ENCODE measurements at regions of chr2 and their contacts with region 1.

Region 1: GRCh38 chr2:118371515-118371914 is 283.2 kb downstream of the INSIG2 start:
- DNase-seq: peak; percentile 62
- H3K4me3 Mint-ChIP-seq: no peak overlapping the region
- H3K27ac Mint-ChIP-seq: no peak overlapping the region
- H3K4me1 Mint-ChIP-seq: peaks cover 7% of the 10 kb centered on the region
- H3K27me3 Mint-ChIP-seq: no peaks in the 10 kb centered on the region
- CTCF ChIP-seq: peak; percentile 90

Region 2: DNA sequence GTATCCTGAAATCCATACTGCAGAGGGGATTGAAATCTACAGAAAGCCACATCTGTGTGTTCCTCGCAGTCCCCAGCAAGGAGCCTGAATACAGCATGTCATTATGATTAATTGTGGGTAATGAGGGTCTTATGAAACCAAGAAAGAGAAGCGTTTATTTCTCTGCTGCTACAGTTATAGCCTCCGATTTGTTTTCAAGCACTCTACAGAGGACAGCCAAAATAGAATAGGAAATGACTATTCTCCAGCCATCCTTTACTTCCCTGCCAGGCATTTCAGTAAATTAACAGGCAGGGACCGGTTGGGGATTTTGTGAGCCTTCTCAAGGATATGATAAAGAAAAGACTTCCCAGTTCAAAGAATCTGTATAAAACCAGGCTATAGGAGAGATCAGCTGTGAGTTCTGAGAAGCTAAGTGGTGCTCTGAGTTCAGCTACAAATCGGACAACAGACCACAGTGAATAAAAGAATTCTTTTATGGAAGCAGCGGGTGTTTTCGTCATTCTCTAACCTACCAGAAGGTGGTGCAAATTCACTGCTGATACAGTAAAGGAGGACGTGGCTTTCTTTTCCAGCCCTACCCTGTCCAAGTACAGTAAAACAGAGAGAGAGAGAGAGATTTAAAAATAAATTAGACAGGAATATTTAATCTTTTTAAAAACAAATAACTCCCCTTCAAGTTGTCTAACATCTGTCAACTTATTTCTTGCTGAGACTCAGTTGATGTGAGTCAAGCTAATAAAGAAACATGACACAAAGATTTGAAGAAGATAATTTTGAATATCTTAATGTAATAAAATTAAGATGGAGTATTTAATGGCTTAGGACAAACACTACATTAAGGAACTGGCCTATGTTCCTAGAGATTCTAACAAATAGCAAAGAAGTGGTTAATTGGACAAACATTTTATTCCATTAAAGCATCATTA is 149.6 kb before region 1 on chr2:
- CTCF ChIA-PET with region 1: interaction called, 16 read pairs
- POLR2A ChIA-PET with region 1: no interaction called
- intact Hi-C with region 1: loop called (anchors 1 kb)
- DNase-seq: peak; percentile 72
- H3K4me3 Mint-ChIP-seq: no peak overlapping the region
- H3K27ac Mint-ChIP-seq: no peak overlapping the region
- H3K4me1 Mint-ChIP-seq: peaks cover 12% of the 10 kb centered on the region
- H3K27me3 Mint-ChIP-seq: peaks cover 3% of the 10 kb centered on the region
- CTCF ChIP-seq: peak; percentile 73

Region 3: GRCh38 chr2:118481299-118481698 is 109.8 kb after region 1 on chr2:
- CTCF ChIA-PET with region 1: interaction called, 4 read pairs
- POLR2A ChIA-PET with region 1: no interaction called
- intact Hi-C with region 1: loop called (anchors 5 kb)
- DNase-seq: no peak
- H3K4me3 Mint-ChIP-seq: no peak overlapping the region
- H3K27ac Mint-ChIP-seq: no peak overlapping the region
- H3K4me1 Mint-ChIP-seq: no peaks in the 10 kb centered on the region
- H3K27me3 Mint-ChIP-seq: no peaks in the 10 kb centered on the region
- CTCF ChIP-seq: no peak

Region 4: DNA sequence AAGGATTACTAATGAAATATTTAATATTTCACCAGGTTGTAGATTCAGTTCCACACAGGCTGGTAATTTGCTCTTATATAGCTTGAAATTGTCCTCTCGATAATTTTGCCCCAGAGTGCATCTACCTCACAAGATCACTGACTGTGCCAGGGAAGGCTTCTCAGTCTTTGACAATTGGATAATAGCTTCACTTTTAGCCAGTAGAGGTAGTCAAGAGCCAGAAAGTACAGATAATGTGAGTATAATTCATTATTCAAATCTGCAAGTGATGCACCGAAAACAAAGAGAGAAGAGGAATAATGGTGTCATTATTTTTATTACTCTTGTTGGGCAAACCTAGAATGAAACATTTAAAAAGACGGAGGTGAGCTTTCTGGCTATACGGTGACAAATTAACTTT is 183.1 kb after region 1 on chr2:
- CTCF ChIA-PET with region 1: no interaction called
- POLR2A ChIA-PET with region 1: no interaction called
- intact Hi-C with region 1: loop called (anchors 5 kb)
- DNase-seq: peak; percentile 3
- H3K4me3 Mint-ChIP-seq: no peak overlapping the region
- H3K27ac Mint-ChIP-seq: no peak overlapping the region
- H3K4me1 Mint-ChIP-seq: no peaks in the 10 kb centered on the region
- H3K27me3 Mint-ChIP-seq: no peaks in the 10 kb centered on the region
- CTCF ChIP-seq: peak; percentile 22

Region 5: GRCh38 chr2:118865106-118865505 is 493.6 kb after region 1 on chr2:
- CTCF ChIA-PET with region 1: interaction called, 122 read pairs
- POLR2A ChIA-PET with region 1: interaction called, 4 read pairs
- intact Hi-C with region 1: loop called (anchors 2 kb)
- DNase-seq: peak; percentile 65
- H3K4me3 Mint-ChIP-seq: no peak overlapping the region
- H3K27ac Mint-ChIP-seq: no peak overlapping the region
- H3K4me1 Mint-ChIP-seq: peaks cover 14% of the 10 kb centered on the region
- H3K27me3 Mint-ChIP-seq: no peaks in the 10 kb centered on the region
- CTCF ChIP-seq: peak; percentile 80

Measured in MCF 10A (cell line).